Uterus (tissue), 4 donors: ENCODE measurements at regions of chr3 and their contacts with region 1.

Region 1: DNA sequence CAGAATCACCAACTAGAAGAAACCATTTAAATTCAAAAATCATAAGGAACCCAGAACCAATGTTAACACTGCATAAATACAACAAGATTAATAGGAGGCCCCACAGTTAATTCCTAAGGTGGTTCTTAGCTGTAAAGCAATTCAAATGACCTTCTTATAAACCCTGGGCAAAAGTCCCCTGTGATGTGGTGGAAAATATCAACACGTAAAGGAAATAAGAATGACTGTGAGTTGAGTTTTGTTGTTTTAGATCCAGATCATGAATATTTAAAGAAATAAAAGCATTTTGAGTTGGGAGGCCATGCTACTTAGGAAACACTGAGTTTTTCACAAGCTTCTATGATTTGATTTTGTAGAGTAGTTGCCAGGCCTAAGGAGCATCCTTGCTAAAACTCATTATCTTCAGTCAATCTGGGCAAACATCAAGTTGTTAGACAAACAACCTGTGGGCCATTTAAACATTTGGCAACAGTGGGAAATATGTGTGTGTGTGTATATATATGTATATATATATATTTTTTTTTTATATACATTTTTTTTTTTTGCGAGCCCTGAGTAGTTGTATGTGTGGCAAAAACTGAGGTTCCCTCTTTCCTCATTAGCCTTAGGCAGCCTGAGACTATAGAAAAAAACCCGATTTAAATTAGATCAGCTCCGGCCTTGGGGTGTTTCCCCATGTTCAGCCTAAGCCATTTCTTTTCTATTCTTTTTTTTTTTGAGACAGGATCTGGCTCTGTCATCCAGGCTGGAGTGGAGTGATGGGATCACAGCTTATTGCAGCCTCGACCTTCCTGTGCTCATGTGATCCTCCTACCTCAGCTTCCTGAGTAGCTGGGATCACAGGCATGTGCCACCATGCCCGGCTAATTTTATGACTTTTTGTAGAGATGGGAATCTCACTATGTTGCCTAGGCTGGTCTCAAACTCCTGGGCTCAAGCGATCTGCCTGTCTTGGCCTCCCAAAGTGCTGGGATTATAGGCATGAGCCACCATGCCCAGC is 8.0 kb upstream of the PXK start:
- DNase-seq: no peak
- H3K4me3 ChIP-seq: no peak overlapping the region
- H3K27ac ChIP-seq: peak overlapping the region in 1 of 2 donors; percentile 29
- H3K4me1 ChIP-seq: no peaks in the 10 kb centered on the region
- H3K27me3 ChIP-seq: no peaks in the 10 kb centered on the region
- CTCF ChIP-seq: no peak
- POLR2A ChIP-seq: no peak

Region 2: DNA sequence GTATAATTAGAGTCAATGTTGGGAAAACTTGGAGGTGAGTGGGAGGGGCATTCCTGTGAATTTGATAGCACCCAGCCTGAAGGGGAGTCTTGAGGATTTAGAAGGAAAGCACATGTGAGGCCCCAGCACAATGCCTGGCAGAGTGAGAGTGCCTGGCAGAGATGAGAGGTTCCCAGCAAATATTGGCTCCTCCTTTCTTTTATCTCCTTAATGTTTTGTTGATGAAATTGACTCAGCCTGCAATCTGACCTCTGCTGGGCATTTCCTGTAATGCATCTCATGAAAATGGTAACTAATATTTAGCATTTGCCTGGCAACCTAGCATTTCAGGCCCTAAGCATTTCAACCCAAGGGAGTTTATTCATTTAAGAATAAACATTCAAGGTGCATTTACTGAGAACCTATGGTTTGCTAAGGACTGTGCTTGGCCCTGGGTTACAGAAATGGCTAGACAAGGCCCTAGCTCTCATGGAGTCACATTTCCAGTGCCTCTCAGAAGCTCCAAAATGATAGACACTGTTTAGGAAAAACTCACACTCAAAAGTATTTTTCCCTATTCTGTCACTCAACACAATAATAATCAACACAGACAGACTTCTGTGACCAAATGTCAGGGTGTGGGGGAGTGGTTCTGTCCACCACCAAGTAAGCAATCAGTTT is 90.0 kb after region 1 on chr3:
- intact Hi-C with region 1: loop called (anchors 5 kb)
- DNase-seq: peak; percentile 50 to 66
- H3K4me3 ChIP-seq: no peak overlapping the region
- H3K27ac ChIP-seq: peak overlapping the region; percentile 45 to 51
- H3K4me1 ChIP-seq: peaks cover 0 to 3% of the 10 kb centered on the region in 2 donors
- H3K27me3 ChIP-seq: no peaks in the 10 kb centered on the region
- CTCF ChIP-seq: peak; percentile 82 to 87 (median 84)
- POLR2A ChIP-seq: no peak